PC-3 (cell line): ENCODE measurements at regions of chr2 and their contacts with region 1.

Region 1: GRCh38 chr2:231563378-231563961 is 29.2 kb upstream of the TEX44 start:
- DNase-seq: peak; percentile 65
- ATAC-seq: peak; percentile 95
- H3K4me3 ChIP-seq: no peak overlapping the region
- H3K27ac ChIP-seq: no peak overlapping the region
- H3K4me1 ChIP-seq: no peaks in the 10 kb centered on the region
- H3K27me3 ChIP-seq: no peaks in the 10 kb centered on the region
- CTCF ChIP-seq: peak; percentile 62

Region 2: DNA sequence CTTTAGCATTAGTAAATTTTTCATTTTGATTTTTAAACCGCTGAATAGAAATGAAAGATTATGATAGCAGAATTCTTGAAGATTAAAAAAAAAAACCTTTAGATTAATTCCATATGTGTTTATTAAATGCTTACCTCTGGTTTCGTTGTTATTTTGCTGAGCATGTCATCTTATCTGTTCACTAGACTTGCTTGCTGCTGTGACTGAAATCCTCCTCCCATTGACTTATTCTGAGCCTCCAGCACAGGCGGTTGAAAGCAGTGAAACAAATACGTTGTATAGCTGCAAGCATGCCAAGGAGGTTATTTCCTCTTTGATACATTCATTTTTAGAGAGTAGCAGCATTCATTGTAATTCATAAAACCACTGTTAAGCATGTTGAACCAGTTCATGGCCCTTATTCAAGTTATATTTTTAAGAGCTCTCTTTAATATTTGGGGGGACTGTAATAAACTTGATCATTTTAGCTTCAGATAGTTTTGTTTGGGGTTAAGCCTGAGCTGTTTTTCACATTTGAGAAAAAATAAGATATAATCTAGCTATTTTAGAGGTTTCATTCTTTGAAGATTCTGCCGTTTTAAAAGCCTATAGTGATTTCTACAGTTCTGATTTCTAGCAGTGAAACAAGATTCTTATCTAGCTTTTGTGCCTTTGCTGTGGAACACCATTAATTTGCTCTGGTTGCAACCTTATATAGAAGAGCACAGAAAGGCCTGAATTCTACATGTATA is 438.5 kb before region 1 on chr2 and contains the start of gene HTR2B:
- CTCF ChIA-PET with region 1: no interaction called
- POLR2A ChIA-PET with region 1: interaction called, 10 read pairs
- intact Hi-C with region 1: no loop called
- DNase-seq: no peak
- ATAC-seq: no peak
- H3K4me3 ChIP-seq: no peak within 1 kb of the TSS
- H3K27ac ChIP-seq: no peak within 1 kb of the TSS
- H3K4me1 ChIP-seq: peaks cover 32% of the 10 kb centered on the region
- H3K27me3 ChIP-seq: no peaks in the 10 kb centered on the region
- CTCF ChIP-seq: no peak
- total RNA-seq, gene HTR2B: not detected in 2 replicates

Region 3: DNA sequence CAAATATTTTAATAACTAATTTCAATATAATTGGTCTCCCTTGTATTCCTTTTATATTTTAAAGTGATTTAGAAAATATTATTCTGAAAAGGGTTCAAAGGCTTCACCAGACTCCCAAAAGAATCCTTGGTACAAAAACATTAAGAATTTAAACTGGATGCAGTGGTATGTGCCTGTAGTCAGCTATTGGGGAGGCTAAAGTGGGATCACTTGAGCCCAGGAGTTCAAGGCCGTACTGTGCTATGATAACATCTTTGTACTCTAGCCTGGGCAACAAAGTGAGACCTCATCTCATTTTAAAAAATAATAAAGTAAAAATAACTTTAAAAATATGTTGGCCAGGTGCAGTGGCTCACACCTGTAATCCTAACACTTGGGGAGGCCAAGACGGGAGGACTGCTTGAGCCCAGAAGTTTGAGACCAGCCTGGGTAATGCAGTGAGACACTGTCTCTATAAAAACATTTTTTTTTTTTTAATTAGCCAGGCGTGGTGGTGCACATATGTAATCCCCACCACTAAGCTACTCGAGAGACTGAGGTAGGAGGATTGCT is 113.9 kb before region 1 on chr2:
- CTCF ChIA-PET with region 1: no interaction called
- POLR2A ChIA-PET with region 1: no interaction called
- intact Hi-C with region 1: no loop called
- DNase-seq: no peak
- ATAC-seq: no peak
- H3K4me3 ChIP-seq: no peak overlapping the region
- H3K27ac ChIP-seq: no peak overlapping the region
- H3K4me1 ChIP-seq: no peaks in the 10 kb centered on the region
- H3K27me3 ChIP-seq: no peaks in the 10 kb centered on the region
- CTCF ChIP-seq: no peak

Region 4: DNA sequence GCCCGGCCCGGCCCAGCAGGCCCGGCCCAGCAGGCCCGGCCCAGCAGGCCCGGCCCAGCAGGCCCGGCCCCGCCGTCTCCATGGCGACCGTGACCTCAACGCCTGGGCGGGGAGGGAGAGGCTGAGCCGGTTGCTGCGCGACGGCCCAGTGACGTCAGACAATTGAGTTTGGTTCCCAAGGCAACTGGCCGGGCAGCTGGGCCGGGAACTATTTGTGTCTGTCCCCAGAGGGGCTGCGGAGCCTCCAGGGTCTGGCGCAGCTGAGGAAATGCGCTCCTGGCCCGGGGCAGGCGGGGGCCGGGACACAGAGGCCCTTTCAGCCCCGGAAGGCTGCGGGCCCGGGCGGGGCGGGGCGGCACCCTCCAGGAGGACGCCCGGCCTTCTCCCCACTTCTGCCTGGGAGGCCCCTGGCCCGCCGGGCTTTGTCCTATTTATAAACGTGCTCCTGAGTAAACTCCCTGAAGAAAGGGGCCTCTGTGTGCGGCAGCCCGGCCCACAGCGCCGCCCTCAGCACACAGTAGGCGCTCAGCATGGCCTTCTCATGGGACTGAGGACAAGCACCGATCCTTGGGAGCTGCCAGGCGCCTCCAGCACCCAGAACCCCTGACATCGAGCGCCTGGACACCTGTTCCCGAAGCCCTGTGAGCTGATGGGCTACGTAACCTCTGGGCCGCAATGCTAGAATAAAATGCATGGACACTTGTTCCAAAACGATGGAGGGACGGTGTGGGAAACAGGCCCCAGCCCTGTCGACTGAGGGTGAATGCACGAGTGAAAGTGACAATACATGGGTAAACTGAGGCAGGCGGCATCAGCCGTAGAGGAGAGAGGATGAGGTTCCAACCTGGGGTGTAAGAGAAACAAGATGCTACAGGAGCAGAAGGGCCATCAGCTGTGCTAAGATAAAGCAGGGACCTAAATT is 41.5 kb after region 1 on chr2:
- CTCF ChIA-PET with region 1: interaction called, 10 read pairs
- POLR2A ChIA-PET with region 1: no interaction called
- intact Hi-C with region 1: loop called (anchors 1 kb)
- DNase-seq: peak; percentile 96
- ATAC-seq: peak; percentile 85
- H3K4me3 ChIP-seq: peak overlapping the region; percentile 71
- H3K27ac ChIP-seq: peak overlapping the region; percentile 52
- H3K4me1 ChIP-seq: peaks cover 16% of the 10 kb centered on the region
- H3K27me3 ChIP-seq: no peaks in the 10 kb centered on the region
- CTCF ChIP-seq: no peak

Region 5: GRCh38 chr2:231696007-231696371 is 132.5 kb after region 1 on chr2:
- CTCF ChIA-PET with region 1: interaction called, 12 read pairs
- POLR2A ChIA-PET with region 1: no interaction called
- intact Hi-C with region 1: no loop called
- DNase-seq: no peak
- ATAC-seq: no peak
- H3K4me3 ChIP-seq: no peak overlapping the region
- H3K27ac ChIP-seq: no peak overlapping the region
- H3K4me1 ChIP-seq: no peaks in the 10 kb centered on the region
- H3K27me3 ChIP-seq: no peaks in the 10 kb centered on the region
- CTCF ChIP-seq: no peak